ENCODE measurements at regions of chr13 and their contacts with region 1.

Region 1: GRCh38 chr13:76991796-76992547 is at the start of gene CLN5:
- DNase-seq: peak; percentile 99
- H3K4me3 Mint-ChIP-seq: peak within 1 kb of the TSS; percentile 96
- H3K27ac Mint-ChIP-seq: peak within 1 kb of the TSS; percentile 95
- H3K4me1 Mint-ChIP-seq: peaks cover 26% of the 10 kb centered on the region
- H3K27me3 Mint-ChIP-seq: peaks cover 5% of the 10 kb centered on the region
- total RNA-seq, gene CLN5: 15.6 and 15.7 TPM in 2 replicates

Region 2: DNA sequence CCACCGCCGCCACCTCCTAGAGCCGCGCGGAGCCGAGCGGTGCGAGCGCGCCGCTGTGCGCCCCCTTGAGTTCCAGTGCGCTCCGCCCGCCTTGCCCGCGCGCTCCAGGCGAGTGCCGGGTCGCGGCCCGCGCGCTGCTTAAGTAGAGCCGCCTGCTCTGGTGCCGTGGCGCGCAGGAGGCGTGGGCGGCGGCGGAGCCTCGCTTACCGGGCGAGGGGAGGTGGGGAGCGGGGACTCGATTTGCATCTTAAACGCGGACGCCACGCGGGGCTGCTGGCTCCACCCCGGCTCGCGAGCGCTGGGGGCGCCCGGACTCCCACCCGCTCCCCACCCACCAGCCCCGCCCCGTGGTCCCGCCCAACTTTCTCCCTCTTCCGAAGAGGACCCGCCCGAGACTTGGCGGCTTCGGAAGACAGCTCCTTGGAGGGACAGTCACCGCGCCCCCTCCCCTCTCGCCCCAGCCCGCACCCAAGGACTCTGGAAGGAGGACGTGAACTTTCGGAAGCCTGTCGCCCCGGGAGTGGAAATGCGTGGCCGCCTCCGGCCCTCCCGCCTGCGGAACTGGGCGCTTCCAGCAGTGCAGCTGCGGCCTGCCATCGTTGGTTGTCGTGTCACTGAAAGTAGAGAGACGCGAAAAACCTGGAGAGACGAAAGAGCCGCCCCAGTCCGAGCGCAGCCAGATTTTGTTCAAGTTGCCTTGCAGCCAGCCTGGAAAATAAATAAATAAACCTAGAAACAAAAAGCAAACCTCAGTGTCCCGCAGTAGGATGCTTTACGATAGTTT is 105.5 kb before region 1 on chr13 and contains the start of gene KCTD12:
- intact Hi-C with region 1: loop called (anchors 1 kb)
- DNase-seq: peak; percentile 93
- H3K4me3 Mint-ChIP-seq: peak within 1 kb of the TSS; percentile 89
- H3K27ac Mint-ChIP-seq: peak within 1 kb of the TSS; percentile 87
- H3K4me1 Mint-ChIP-seq: peaks cover 26% of the 10 kb centered on the region
- H3K27me3 Mint-ChIP-seq: peaks cover 40% of the 10 kb centered on the region
- total RNA-seq, gene KCTD12: 11.8 and 12.9 TPM in 2 replicates

Region 3: DNA sequence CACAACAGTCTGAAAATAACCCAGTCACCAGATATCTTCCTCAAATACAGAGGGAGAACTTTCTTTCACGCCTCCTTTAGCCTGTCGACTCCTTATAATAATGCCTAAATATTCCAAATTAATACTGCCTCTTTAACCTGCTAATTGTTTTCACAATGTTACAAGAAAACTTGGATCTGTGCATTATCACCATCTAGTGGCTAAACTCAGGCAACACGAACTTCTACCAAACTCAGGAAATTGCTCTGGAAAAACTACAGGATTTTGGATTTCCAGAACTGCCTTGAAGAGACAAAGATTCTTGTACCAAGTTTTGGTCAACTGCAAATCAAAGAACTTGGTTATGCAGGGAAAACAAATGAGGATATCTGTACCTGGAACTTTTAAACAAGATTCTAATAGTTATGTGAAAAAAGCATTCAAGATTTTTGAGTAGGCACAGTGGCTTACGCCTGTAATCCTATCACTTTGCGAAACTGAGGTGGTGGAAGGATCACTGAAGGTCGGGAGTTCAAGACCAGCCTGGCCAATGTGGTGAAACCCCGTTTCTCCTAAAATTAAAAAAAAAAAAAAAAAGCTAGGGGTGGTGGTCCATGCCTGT is 10.7 kb after region 1 on chr13:
- intact Hi-C with region 1: loop called (anchors 1 kb)
- DNase-seq: no peak
- H3K4me3 Mint-ChIP-seq: no peak overlapping the region
- H3K27ac Mint-ChIP-seq: no peak overlapping the region
- H3K4me1 Mint-ChIP-seq: peaks cover 7% of the 10 kb centered on the region
- H3K27me3 Mint-ChIP-seq: no peaks in the 10 kb centered on the region